Activated T-helper 1 cell treated with anti-CD3 and anti-CD28 coated beads, Interleukin-12 subunit alpha, Interleukin-12 subunit beta, Interleukin-2, Interleukin-4 antibody, amounts not matched to agents 30 ng/mL and 10 ng/mL and 1 ng/mL, durations not matched to agents 14 hours and 24 hours and 36 hours (primary cell): ENCODE measurements at regions of chr3 and their contacts with region 1.

Region 1: GRCh38 chr3:59450946-59451763 is 401.3 kb upstream of the CFAP20DC start:
- DNase-seq: peak; percentile 74
- H3K4me3 Mint-ChIP-seq: peak overlapping the region; percentile 65
- H3K27ac Mint-ChIP-seq: peak overlapping the region; percentile 97
- H3K4me1 Mint-ChIP-seq: peaks cover 81% of the 10 kb centered on the region
- H3K27me3 Mint-ChIP-seq: no peaks in the 10 kb centered on the region

Region 2: DNA sequence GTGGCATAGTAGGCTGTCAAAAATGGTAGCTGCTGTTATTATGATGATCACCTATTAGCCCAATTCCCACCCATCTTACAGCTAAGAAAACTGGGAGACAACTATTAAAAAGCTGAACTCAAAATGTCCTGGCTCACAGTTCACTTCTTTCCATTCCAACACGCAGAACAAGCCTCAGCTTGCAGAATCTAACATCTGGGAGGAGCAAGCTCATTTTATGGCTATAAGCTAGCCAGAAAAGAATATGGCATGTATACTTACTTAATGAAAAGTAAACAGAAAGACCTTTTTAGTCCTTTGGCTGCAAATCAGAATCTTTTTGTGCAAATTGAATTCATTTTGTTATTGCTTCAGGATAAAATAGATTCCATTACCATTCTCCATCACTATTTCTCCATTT is 366.6 kb before region 1 on chr3:
- intact Hi-C with region 1: no loop called
- DNase-seq: no peak
- H3K4me3 Mint-ChIP-seq: no peak overlapping the region
- H3K27ac Mint-ChIP-seq: no peak overlapping the region
- H3K4me1 Mint-ChIP-seq: no peaks in the 10 kb centered on the region
- H3K27me3 Mint-ChIP-seq: peaks cover 25% of the 10 kb centered on the region

Region 3: DNA sequence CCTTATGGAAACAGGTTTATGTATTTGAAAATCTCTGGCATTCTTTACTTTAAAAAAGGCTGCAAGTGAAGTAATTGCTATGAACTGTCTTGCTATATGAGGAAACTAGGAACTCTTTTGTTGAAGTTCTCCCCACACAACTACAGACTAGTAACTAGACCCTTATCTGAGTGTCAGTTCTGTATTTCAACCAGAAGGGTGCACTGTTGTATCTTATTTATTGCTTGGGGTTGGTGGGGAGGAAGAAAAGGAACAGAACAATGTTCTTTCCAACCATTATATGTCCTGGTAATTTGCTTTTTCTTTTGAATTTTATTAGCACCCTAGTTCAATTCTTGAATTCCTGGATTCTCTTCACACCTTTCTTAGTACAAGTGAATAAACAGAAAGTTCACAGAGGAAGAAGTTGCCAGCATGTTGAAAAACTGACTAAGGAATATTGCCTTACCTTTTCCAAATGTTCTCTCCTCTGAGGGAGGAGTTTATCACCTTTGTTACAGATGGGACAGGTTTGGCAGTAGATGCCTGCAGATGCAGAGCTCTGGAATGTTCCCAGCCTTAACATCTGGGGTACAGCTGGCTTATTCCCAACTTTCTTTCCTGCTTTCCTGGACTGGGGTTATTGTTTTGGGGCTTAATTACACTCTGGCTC is 238.9 kb before region 1 on chr3:
- intact Hi-C with region 1: loop called (anchors 1 kb)
- DNase-seq: no peak
- H3K4me3 Mint-ChIP-seq: no peak overlapping the region
- H3K27ac Mint-ChIP-seq: no peak overlapping the region
- H3K4me1 Mint-ChIP-seq: peaks cover 11% of the 10 kb centered on the region
- H3K27me3 Mint-ChIP-seq: peaks cover 14% of the 10 kb centered on the region

Region 4: GRCh38 chr3:59313365-59313764 is 137.8 kb before region 1 on chr3:
- intact Hi-C with region 1: loop called (anchors 1 kb)
- DNase-seq: peak; percentile 22
- H3K4me3 Mint-ChIP-seq: no peak overlapping the region
- H3K27ac Mint-ChIP-seq: peak overlapping the region; percentile 49
- H3K4me1 Mint-ChIP-seq: peaks cover 47% of the 10 kb centered on the region
- H3K27me3 Mint-ChIP-seq: peaks cover 2% of the 10 kb centered on the region

Region 5: GRCh38 chr3:59480486-59480995 is 29.4 kb after region 1 on chr3:
- intact Hi-C with region 1: loop called (anchors 1 kb)
- DNase-seq: no peak
- H3K4me3 Mint-ChIP-seq: peak overlapping the region; percentile 52
- H3K27ac Mint-ChIP-seq: peak overlapping the region; percentile 72
- H3K4me1 Mint-ChIP-seq: peaks cover 41% of the 10 kb centered on the region
- H3K27me3 Mint-ChIP-seq: no peaks in the 10 kb centered on the region

Region 6: DNA sequence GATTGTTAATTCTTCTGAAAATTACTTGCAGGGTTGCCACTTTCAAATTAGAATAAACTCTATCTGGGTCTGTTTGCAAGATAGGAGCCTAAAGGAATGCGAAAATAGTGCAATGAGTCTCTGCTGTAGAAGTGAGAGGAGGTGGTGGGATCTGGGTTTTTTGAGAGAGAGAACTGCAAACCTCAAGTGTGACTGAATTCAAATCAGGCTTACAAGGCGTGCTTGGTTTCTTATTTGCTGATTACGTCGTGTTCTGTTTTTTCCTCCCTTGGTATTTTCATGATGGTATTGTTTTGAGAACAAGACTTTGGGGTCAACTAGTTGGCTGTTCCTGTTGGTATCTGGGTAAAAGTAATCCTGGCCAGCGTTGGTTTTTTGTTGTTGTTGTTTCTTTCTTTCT is 89.5 kb after region 1 on chr3:
- intact Hi-C with region 1: loop called (anchors 5 kb)
- DNase-seq: no peak
- H3K4me3 Mint-ChIP-seq: no peak overlapping the region
- H3K27ac Mint-ChIP-seq: peak overlapping the region; percentile 38
- H3K4me1 Mint-ChIP-seq: peaks cover 23% of the 10 kb centered on the region
- H3K27me3 Mint-ChIP-seq: peaks cover 2% of the 10 kb centered on the region

Region 7: DNA sequence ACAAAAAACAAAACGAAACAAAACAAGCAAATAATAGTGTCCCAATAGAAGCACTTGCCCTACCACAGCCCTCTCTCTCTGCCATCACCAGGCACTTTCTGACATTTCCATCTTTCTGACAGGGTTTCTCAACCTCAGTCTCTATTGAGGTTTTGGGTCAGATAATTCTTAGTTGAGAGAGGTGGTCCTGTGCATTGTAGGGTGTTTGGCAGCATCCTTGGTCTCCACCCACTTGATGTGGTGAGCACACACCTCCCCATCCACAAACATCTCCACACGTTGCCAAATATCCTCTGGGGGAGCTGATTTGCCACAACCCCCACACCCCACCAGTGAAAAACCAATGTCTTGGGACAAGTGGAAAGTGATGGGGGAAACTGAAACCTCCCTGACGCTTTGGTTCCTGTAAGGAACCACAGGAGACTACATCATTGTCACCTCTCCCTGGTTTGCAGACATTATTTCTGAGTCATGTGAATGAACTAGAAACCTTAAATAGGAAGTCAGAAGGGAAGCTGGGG is 332.4 kb after region 1 on chr3:
- intact Hi-C with region 1: loop called (anchors 1 kb)
- DNase-seq: peak; percentile 31
- H3K4me3 Mint-ChIP-seq: peak overlapping the region; percentile 40
- H3K27ac Mint-ChIP-seq: peak overlapping the region; percentile 91
- H3K4me1 Mint-ChIP-seq: peaks cover 41% of the 10 kb centered on the region
- H3K27me3 Mint-ChIP-seq: no peaks in the 10 kb centered on the region

Region 8: GRCh38 chr3:60010781-60011180 is 559.6 kb after region 1 on chr3:
- intact Hi-C with region 1: loop called (anchors 10 kb)
- DNase-seq: peak; percentile 73
- H3K4me3 Mint-ChIP-seq: peak overlapping the region; percentile 74
- H3K27ac Mint-ChIP-seq: peak overlapping the region; percentile 91
- H3K4me1 Mint-ChIP-seq: peaks cover 76% of the 10 kb centered on the region
- H3K27me3 Mint-ChIP-seq: peaks cover 2% of the 10 kb centered on the region